ENCODE measurements at regions of chr12 and their contacts with region 1.

Region 1: DNA sequence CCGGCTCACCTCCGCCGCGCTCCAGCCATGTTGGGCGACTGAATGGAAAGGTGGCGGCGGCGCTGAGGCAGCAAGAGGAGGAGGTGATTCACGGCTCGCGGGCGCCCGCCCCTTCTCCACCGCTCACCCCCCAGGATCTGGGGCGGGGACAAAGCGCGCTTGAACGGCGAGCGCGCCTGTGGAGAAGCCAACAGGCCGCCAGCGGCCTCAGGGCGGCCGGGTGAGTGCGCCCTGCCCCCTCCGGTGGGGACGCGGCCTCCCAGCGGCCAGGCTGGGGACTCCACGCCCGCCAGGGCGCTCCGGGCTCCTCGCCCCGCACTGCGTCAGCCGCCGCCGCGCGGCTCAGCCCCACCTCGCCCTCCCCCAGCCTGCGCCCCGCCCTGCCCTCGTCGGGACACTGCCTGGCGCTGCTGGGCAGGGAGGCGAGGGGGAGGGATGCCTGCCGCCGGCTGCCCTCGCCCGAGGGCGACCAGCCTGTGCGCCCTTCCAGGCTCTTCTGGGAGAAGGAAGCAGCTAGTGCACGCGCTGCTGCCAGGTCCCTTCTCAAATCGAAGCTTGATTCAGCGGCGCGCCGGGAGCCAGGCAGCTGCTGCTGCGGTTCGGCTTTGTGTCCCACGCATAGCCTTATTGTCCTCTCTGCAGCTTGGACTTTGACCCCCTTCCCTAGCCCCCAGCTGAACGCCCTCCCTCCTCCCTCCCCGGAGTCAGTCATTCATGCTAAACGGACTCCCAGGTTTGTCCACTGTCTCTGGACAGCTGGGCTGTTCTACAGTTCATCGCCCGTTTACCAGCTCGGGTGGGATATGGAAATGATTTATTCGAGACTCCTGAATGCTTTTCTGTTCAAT is at the start of gene KIF21A:
- DNase-seq: peak; percentile 94
- H3K4me3 Mint-ChIP-seq: peak within 1 kb of the TSS; percentile 94
- H3K27ac Mint-ChIP-seq: peak within 1 kb of the TSS; percentile 87
- H3K4me1 Mint-ChIP-seq: peaks cover 16% of the 10 kb centered on the region
- H3K27me3 Mint-ChIP-seq: no peaks in the 10 kb centered on the region
- CTCF ChIP-seq: peak; percentile 48
- total RNA-seq, gene KIF21A: 26.0 and 28.7 TPM in 2 replicates

Region 2: DNA sequence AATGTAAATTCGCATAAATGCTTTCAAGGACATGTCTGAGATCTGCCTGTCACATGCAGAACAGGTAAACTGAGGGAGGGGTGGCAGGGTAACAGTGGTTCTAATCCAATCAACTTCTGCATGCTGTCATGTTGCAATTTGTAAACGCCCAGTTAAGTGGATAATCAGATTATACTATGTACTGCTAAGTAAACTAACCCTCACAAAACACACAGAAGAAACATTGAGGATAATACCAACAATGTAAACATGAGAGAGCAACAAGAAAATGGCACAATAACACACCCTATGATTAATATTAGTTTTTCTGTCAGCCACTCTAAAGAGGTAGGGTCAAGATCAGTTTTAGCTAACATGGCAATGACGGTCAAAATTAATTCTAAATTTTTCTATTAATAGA is 124.1 kb before region 1 on chr12:
- CTCF ChIA-PET with region 1: no interaction called
- intact Hi-C with region 1: loop called (anchors 5 kb)
- DNase-seq: no peak
- H3K4me3 Mint-ChIP-seq: no peak overlapping the region
- H3K27ac Mint-ChIP-seq: no peak overlapping the region
- H3K4me1 Mint-ChIP-seq: no peaks in the 10 kb centered on the region
- H3K27me3 Mint-ChIP-seq: no peaks in the 10 kb centered on the region
- CTCF ChIP-seq: no peak

Region 3: GRCh38 chr12:39503445-39503844 is 60.1 kb after region 1 on chr12:
- CTCF ChIA-PET with region 1: no interaction called
- intact Hi-C with region 1: no loop called
- DNase-seq: no peak
- H3K4me3 Mint-ChIP-seq: no peak overlapping the region
- H3K27ac Mint-ChIP-seq: no peak overlapping the region
- H3K4me1 Mint-ChIP-seq: peaks cover 11% of the 10 kb centered on the region
- H3K27me3 Mint-ChIP-seq: no peaks in the 10 kb centered on the region
- CTCF ChIP-seq: no peak

Region 4: DNA sequence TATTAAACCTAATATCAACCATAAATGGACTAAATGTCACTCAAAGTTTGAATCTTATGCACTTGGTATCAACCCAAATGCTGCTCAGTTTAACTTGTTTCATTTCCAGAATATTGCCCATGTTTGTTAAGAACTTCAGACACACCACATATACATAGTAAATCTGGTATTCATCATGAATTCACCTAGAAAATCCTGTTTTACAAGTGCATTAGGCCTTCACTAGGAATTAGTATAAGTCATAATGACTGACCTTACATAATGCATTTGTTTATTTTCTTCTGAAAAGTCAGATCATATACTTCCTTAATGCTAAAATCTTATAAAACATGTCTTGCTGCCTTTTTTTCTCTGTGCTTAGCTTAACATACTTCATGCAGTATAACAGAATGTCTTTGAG is 110.2 kb after region 1 on chr12:
- CTCF ChIA-PET with region 1: no interaction called
- intact Hi-C with region 1: loop called (anchors 10 kb)
- DNase-seq: no peak
- H3K4me3 Mint-ChIP-seq: no peak overlapping the region
- H3K27ac Mint-ChIP-seq: no peak overlapping the region
- H3K4me1 Mint-ChIP-seq: no peaks in the 10 kb centered on the region
- H3K27me3 Mint-ChIP-seq: no peaks in the 10 kb centered on the region
- CTCF ChIP-seq: no peak

Measured in Calu3 (cell line).